Naive thymus-derived CD4-positive, alpha-beta T cell (primary cell): ENCODE measurements at regions of chrX and their contacts with region 1.

Region 1: GRCh38 chrX:54999717-55000598 is at the start of gene APEX2:
- DNase-seq: peak; percentile 66 to 89 (median 85)
- ATAC-seq: peak; percentile 97
- H3K4me3 ChIP-seq: peak within 1 kb of the TSS; percentile 95
- H3K4me3 Mint-ChIP-seq: peak within 1 kb of the TSS; percentile 90 to 97 (median 94)
- H3K27ac ChIP-seq: peak within 1 kb of the TSS; percentile 90
- H3K27ac Mint-ChIP-seq: peak within 1 kb of the TSS; percentile 94 to 99 (median 96)
- H3K4me1 ChIP-seq: peaks cover 9 to 17% of the 10 kb centered on the region in 2 donors
- H3K4me1 Mint-ChIP-seq: peaks cover 8 to 35% (median 26%) of the 10 kb centered on the region in 7 donors
- H3K27me3 ChIP-seq: no peaks in the 10 kb centered on the region
- H3K27me3 Mint-ChIP-seq: no peaks in the 10 kb centered on the region
- total RNA-seq, gene APEX2: 6.5 to 24.6 (median 12.2) TPM

Region 2: GRCh38 chrX:54044126-54044876 is 955.7 kb before region 1 on chrX and contains the start of gene PHF8:
- CTCF ChIA-PET with region 1: no interaction called
- POLR2A ChIA-PET with region 1: no interaction called
- intact Hi-C with region 1: loop called in 1 of 2 experiments (anchors 2 kb)
- DNase-seq: peak; percentile 84 to 96 (median 94)
- ATAC-seq: peak; percentile 90
- H3K4me3 ChIP-seq: peak within 1 kb of the TSS; percentile 80
- H3K4me3 Mint-ChIP-seq: peak within 1 kb of the TSS; percentile 84 to 96 (median 94)
- H3K27ac ChIP-seq: peak within 1 kb of the TSS; percentile 95
- H3K27ac Mint-ChIP-seq: peak within 1 kb of the TSS; percentile 93 to 99 (median 97)
- H3K4me1 ChIP-seq: peaks cover 9% of the 10 kb centered on the region in 2 donors
- H3K4me1 Mint-ChIP-seq: peaks cover 8 to 33% (median 17%) of the 10 kb centered on the region in 7 donors
- H3K27me3 ChIP-seq: no peaks in the 10 kb centered on the region
- H3K27me3 Mint-ChIP-seq: no peaks in the 10 kb centered on the region
- total RNA-seq, gene PHF8: 48.5 to 80.2 (median 54.5) TPM

Region 3: DNA sequence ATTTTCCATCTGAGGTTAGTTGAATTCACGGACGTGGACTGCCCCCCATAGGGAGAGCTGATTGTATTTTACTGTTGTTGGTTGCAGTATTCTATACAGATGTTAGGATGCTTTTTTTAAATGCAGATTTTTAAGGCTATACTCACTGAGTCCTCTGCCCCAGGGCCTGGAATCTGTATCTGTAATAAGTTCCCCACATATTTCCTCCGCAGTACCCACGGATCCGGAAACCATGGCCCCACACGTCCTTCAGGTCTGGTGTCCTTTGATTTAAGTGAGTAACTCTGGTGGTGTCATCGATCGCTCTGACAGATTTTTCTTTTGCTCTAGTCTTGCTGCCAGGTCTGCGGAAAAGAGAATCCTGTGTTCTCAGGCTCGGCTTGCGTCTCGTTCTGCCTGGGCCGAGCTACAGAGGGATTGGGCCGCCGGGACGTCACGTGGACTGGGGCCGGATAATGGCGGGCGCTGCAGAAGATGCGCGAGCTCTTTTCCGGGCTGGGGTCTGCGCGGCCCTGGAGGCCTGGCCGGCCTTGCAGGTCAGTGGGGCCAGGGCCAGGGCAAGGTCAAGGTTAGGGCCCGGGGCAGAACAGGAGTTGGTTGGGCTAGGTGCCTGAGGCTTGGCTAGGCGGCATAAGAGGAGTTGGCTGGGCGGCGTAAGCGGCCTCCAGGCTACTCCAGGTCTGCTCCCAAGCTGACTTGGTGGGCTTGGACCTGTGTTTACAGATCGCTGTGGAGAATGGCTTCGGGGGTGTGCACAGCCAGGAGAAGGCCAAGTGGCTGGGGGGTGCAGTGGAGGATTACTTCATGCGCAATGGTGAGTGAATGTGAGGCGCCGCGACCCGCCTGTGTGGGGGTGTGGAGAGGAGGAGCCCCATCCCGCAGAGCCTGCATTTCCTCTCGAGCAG is 559.7 kb before region 1 on chrX and contains the start of gene TSR2:
- CTCF ChIA-PET with region 1: no interaction called
- POLR2A ChIA-PET with region 1: interaction called, 5 read pairs
- intact Hi-C with region 1: loop called in 1 of 2 experiments (anchors 1 kb)
- DNase-seq: peak; percentile 50 to 80 (median 74)
- ATAC-seq: peak; percentile 99
- H3K4me3 ChIP-seq: peak within 1 kb of the TSS; percentile 94
- H3K4me3 Mint-ChIP-seq: peak within 1 kb of the TSS; percentile 84 to 100 (median 92)
- H3K27ac ChIP-seq: peak within 1 kb of the TSS; percentile 81
- H3K27ac Mint-ChIP-seq: peak within 1 kb of the TSS; percentile 73 to 94 (median 86)
- H3K4me1 ChIP-seq: peaks cover 8 to 12% of the 10 kb centered on the region in 2 donors
- H3K4me1 Mint-ChIP-seq: peaks cover 15 to 39% (median 26%) of the 10 kb centered on the region in 7 donors
- H3K27me3 ChIP-seq: no peaks in the 10 kb centered on the region
- H3K27me3 Mint-ChIP-seq: no peaks in the 10 kb centered on the region
- total RNA-seq, gene TSR2: 33.6 to 43.3 (median 40.5) TPM

Region 4: DNA sequence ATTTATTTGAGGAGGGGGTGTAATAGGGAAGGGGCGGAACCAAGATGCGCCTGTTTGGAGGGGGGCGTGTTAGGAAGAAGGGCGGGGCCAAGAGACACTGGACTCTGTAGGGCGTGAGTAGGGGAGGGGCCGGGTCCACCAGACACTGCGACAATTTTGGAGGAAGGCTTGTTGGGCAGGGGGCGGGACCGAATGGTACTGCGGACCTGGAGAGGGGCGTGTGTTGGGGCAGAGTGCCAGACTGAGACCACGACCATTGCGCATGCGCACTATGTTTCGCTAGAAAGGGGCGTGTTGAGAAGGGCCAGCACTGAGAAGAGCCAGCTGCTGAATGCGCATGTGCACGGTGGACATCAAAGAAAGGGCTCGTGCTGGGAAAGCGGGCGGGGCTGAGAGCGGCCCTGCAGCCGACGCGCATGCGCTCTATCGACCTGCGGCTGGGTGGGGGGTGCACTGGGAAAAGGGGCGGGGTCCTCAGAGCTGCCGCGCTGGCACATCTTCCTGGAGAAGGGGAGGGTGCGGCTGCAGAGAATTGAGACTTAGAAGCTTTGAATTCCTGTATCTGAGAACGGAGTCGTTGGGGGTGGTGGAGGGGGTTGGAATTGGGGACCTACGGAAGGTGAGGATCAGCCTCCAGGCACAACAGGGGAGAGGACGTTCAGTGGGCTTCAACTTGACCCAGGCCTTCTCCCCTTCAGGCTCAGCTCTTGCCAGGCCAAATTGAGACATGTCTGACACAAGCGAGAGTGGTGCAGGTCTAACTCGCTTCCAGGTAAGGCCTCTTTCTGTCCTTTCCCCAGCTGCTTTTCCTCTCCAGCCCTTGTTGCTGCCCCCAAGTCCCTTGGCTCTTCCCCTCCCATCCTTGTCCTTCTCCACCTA is 191.1 kb before region 1 on chrX:
- CTCF ChIA-PET with region 1: no interaction called
- POLR2A ChIA-PET with region 1: interaction called, 5 read pairs
- intact Hi-C with region 1: loop called (anchors 1 kb)
- DNase-seq: peak; percentile 63 to 90 (median 84)
- ATAC-seq: peak; percentile 84
- H3K4me3 ChIP-seq: peak overlapping the region; percentile 93
- H3K4me3 Mint-ChIP-seq: peak overlapping the region; percentile 90 to 99 (median 96)
- H3K27ac ChIP-seq: peak overlapping the region; percentile 89
- H3K27ac Mint-ChIP-seq: peak overlapping the region; percentile 93 to 98 (median 96)
- H3K4me1 ChIP-seq: no peaks in the 10 kb centered on the region
- H3K4me1 Mint-ChIP-seq: peaks cover 5 to 28% (median 19%) of the 10 kb centered on the region in 7 donors
- H3K27me3 ChIP-seq: no peaks in the 10 kb centered on the region
- H3K27me3 Mint-ChIP-seq: peaks cover 0 to 25% (median 0%) of the 10 kb centered on the region in 5 donors

Region 5: GRCh38 chrX:54825716-54826438 is 174.1 kb before region 1 on chrX:
- CTCF ChIA-PET with region 1: no interaction called
- POLR2A ChIA-PET with region 1: no interaction called
- intact Hi-C with region 1: no loop called
- DNase-seq: peak in 5 of 9 donors; percentile 21 to 42 (median 27)
- ATAC-seq: peak; percentile 51
- H3K4me3 ChIP-seq: no peak overlapping the region
- H3K4me3 Mint-ChIP-seq: no peak overlapping the region
- H3K27ac ChIP-seq: no peak overlapping the region
- H3K27ac Mint-ChIP-seq: peak overlapping the region in 3 of 9 donors; percentile 1 to 31 (median 30)
- H3K4me1 ChIP-seq: no peaks in the 10 kb centered on the region
- H3K4me1 Mint-ChIP-seq: peaks cover 0 to 4% (median 0%) of the 10 kb centered on the region in 7 donors
- H3K27me3 ChIP-seq: no peaks in the 10 kb centered on the region
- H3K27me3 Mint-ChIP-seq: no peaks in the 10 kb centered on the region

Region 6: GRCh38 chrX:54921427-54922021 is 78.4 kb before region 1 on chrX:
- CTCF ChIA-PET with region 1: no interaction called
- POLR2A ChIA-PET with region 1: interaction called, 7 read pairs
- intact Hi-C with region 1: loop called (anchors 1 to 5 kb)
- DNase-seq: peak; percentile 18 to 61 (median 34)
- ATAC-seq: peak; percentile 85
- H3K4me3 ChIP-seq: peak overlapping the region; percentile 71
- H3K4me3 Mint-ChIP-seq: peak overlapping the region; percentile 79 to 96 (median 92)
- H3K27ac ChIP-seq: peak overlapping the region; percentile 42
- H3K27ac Mint-ChIP-seq: peak overlapping the region; percentile 12 to 94 (median 84)
- H3K4me1 ChIP-seq: peaks cover 0 to 9% of the 10 kb centered on the region in 2 donors
- H3K4me1 Mint-ChIP-seq: peaks cover 11 to 23% (median 16%) of the 10 kb centered on the region in 7 donors
- H3K27me3 ChIP-seq: no peaks in the 10 kb centered on the region
- H3K27me3 Mint-ChIP-seq: peaks cover 0 to 13% (median 0%) of the 10 kb centered on the region in 5 donors

Region 7: DNA sequence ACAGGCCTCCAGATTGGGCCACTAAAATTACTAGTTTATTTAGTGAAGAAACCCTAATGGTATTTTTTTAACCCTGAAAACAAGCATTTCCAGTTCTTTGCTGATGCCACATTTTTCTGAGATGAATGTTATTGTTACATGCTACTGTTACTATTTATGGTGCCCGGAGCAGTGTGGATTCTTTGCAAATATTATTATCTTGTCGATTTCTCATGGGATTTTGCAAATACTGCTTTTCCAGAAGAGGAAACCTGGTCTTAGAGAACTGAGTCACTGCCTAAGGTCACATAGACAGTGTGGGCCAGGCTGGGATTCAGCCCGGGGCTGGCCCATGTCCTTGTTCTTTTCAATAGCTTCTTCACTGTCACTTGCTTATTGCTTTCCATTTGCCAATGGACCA is 39.5 kb after region 1 on chrX:
- CTCF ChIA-PET with region 1: no interaction called
- POLR2A ChIA-PET with region 1: no interaction called
- intact Hi-C with region 1: no loop called
- DNase-seq: no peak
- ATAC-seq: no peak
- H3K4me3 ChIP-seq: no peak overlapping the region
- H3K4me3 Mint-ChIP-seq: no peak overlapping the region
- H3K27ac ChIP-seq: no peak overlapping the region
- H3K27ac Mint-ChIP-seq: no peak overlapping the region
- H3K4me1 ChIP-seq: no peaks in the 10 kb centered on the region
- H3K4me1 Mint-ChIP-seq: no peaks in the 10 kb centered on the region
- H3K27me3 ChIP-seq: no peaks in the 10 kb centered on the region
- H3K27me3 Mint-ChIP-seq: no peaks in the 10 kb centered on the region

Region 8: DNA sequence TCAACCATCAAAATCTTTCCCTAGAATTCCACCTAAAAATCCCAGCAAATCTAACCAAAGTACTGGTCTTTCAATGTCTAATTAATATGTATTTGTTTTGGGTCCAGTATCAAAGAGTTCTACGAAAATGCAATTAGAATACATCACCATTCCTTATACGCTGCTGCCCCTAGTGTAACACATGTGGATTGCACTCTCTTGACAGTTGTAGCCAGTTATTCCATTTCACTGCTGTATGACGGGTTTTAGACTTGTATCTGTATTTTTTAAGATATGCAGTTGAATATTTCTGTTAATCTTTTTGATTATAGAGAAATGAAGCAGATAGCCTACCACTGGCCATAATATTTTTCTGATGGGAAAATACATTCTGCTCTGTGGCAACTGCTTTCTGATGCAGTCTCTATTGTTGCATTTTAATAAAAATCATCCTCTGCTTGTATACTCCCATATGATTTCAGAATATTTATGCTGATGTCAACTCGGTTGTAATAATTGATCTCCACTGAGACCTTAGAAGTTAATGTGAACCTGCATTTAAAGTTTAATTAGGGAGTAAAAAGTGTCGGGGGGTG is 57.8 kb after region 1 on chrX:
- CTCF ChIA-PET with region 1: interaction called, 3 read pairs
- POLR2A ChIA-PET with region 1: interaction called, 5 read pairs
- intact Hi-C with region 1: loop called (anchors 1 to 2 kb)
- DNase-seq: peak in 6 of 9 donors; percentile 11 to 46 (median 32)
- ATAC-seq: peak; percentile 84
- H3K4me3 ChIP-seq: peak overlapping the region; percentile 35
- H3K4me3 Mint-ChIP-seq: peak overlapping the region; percentile 12 to 87 (median 76)
- H3K27ac ChIP-seq: no peak overlapping the region
- H3K27ac Mint-ChIP-seq: peak overlapping the region in 7 of 9 donors; percentile 43 to 95 (median 90)
- H3K4me1 ChIP-seq: peaks cover 8 to 16% of the 10 kb centered on the region in 2 donors
- H3K4me1 Mint-ChIP-seq: peaks cover 8 to 29% (median 21%) of the 10 kb centered on the region in 7 donors
- H3K27me3 ChIP-seq: no peaks in the 10 kb centered on the region
- H3K27me3 Mint-ChIP-seq: peaks cover 0 to 5% (median 0%) of the 10 kb centered on the region in 5 donors